Naive thymus-derived CD4-positive, alpha-beta T cell (primary cell): ENCODE measurements at regions of chr15 and their contacts with region 1.

Region 1: DNA sequence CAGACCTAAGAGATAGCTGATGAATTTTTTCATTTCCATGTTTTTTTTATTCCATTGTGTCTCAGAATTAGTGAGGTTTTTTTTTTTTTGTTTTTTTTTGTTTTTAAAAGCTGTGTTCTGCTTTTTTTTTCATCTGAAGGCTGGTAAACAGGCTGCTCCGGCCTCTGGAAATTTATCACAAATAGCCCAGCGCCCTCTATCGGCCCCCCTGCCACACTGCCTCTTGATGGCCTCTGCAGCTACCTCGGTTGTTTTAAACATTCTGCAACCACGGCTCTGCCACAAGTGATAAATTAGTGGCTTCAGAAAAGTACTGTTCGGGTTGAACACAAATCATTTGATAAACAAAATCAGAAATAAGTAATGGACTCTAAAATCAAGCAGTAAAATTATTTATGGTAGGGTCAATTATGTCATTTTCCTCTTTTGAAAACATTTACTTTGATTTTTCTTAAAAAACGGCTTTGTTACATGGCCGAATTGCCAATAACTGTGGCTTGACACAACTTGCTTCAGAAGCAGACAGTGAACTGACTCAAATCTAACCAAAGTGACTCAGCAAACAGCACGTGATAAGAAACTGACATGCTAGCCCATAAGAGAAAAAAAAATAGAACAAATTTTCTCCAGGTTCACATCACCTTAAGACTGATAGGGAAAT is 87.8 kb downstream of the RSL24D1 start:
- DNase-seq: peak in 8 of 9 donors; percentile 4 to 54 (median 21)
- ATAC-seq: no peak
- H3K4me3 ChIP-seq: no peak overlapping the region
- H3K4me3 Mint-ChIP-seq: no peak overlapping the region
- H3K27ac ChIP-seq: no peak overlapping the region
- H3K27ac Mint-ChIP-seq: no peak overlapping the region
- H3K4me1 ChIP-seq: no peaks in the 10 kb centered on the region
- H3K4me1 Mint-ChIP-seq: no peaks in the 10 kb centered on the region
- H3K27me3 ChIP-seq: no peaks in the 10 kb centered on the region
- H3K27me3 Mint-ChIP-seq: peaks cover 0 to 8% (median 5%) of the 10 kb centered on the region in 5 donors

Region 2: GRCh38 chr15:54082836-54083492 is 1026.0 kb before region 1 on chr15:
- CTCF ChIA-PET with region 1: no interaction called
- POLR2A ChIA-PET with region 1: no interaction called
- intact Hi-C with region 1: loop called in 1 of 2 experiments (anchors 2 kb)
- DNase-seq: peak in 2 of 9 donors; percentile 0 to 4
- ATAC-seq: no peak
- H3K4me3 ChIP-seq: no peak overlapping the region
- H3K4me3 Mint-ChIP-seq: no peak overlapping the region
- H3K27ac ChIP-seq: no peak overlapping the region
- H3K27ac Mint-ChIP-seq: no peak overlapping the region
- H3K4me1 ChIP-seq: no peaks in the 10 kb centered on the region
- H3K4me1 Mint-ChIP-seq: no peaks in the 10 kb centered on the region
- H3K27me3 ChIP-seq: no peaks in the 10 kb centered on the region
- H3K27me3 Mint-ChIP-seq: peaks cover 0 to 23% (median 5%) of the 10 kb centered on the region in 5 donors

Region 3: DNA sequence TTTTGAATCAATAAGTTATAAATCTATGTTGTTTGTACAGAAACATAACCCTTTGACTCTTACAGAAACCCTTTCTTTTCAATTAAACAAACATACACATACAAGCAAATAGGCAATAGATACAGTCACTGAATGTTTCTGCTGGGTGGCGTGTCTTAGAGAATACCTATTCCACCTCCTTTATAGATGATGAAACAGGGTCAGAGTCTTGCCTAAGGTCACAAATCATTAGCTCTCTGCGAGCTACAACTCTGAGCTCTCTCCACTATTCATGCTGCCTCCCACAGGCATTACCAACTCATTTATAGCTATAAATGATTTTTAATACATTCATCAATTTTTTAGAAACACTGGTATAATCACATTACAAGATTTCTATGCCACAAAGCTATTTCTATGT is 64.8 kb before region 1 on chr15:
- CTCF ChIA-PET with region 1: no interaction called
- POLR2A ChIA-PET with region 1: no interaction called
- intact Hi-C with region 1: loop called in 1 of 2 experiments (anchors 5 kb)
- DNase-seq: no peak
- ATAC-seq: no peak
- H3K4me3 ChIP-seq: no peak overlapping the region
- H3K4me3 Mint-ChIP-seq: no peak overlapping the region
- H3K27ac ChIP-seq: no peak overlapping the region
- H3K27ac Mint-ChIP-seq: no peak overlapping the region
- H3K4me1 ChIP-seq: no peaks in the 10 kb centered on the region
- H3K4me1 Mint-ChIP-seq: no peaks in the 10 kb centered on the region
- H3K27me3 ChIP-seq: no peaks in the 10 kb centered on the region
- H3K27me3 Mint-ChIP-seq: peaks cover 4 to 25% (median 18%) of the 10 kb centered on the region in 5 donors

Region 4: GRCh38 chr15:55060836-55061235 is 48.2 kb before region 1 on chr15:
- CTCF ChIA-PET with region 1: no interaction called
- POLR2A ChIA-PET with region 1: no interaction called
- intact Hi-C with region 1: no loop called
- DNase-seq: no peak
- ATAC-seq: no peak
- H3K4me3 ChIP-seq: no peak overlapping the region
- H3K4me3 Mint-ChIP-seq: no peak overlapping the region
- H3K27ac ChIP-seq: no peak overlapping the region
- H3K27ac Mint-ChIP-seq: no peak overlapping the region
- H3K4me1 ChIP-seq: no peaks in the 10 kb centered on the region
- H3K4me1 Mint-ChIP-seq: no peaks in the 10 kb centered on the region
- H3K27me3 ChIP-seq: no peaks in the 10 kb centered on the region
- H3K27me3 Mint-ChIP-seq: peaks cover 0 to 37% (median 19%) of the 10 kb centered on the region in 5 donors